ENCODE measurements at regions of chr18 and their contacts with region 1.

Region 1: DNA sequence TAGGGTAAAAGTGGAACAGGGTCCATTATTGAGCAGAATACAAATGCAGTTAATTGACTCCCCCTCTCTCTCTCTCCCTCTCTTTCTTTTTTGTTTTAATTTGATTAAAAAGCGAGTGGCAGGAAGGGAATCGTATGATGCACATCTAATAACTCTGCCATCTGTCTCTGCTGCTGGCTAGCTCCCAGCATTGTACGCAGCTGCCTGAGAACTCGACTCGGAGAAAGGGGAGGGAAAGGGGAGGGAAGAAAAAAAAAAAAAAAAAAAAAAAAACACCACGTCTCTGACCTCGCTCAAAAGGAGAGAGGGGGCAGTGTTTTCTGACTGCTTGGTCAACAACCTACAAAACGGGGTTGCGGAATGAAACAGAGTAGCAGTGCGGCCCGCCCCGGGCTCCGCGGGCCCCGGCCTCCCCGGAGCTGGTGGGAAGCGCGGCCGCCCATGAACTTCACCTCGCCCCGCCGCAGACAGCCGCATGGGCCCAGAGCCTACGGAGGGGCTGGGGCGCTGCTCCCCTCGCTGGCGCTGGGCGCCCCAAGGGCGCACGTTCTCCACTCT is 265.7 kb downstream of the TCF4 start:
- DNase-seq: peak; percentile 60
- ATAC-seq: peak; percentile 62
- H3K4me3 Mint-ChIP-seq: peak overlapping the region; percentile 90
- H3K27ac Mint-ChIP-seq: peak overlapping the region; percentile 92
- H3K4me1 Mint-ChIP-seq: peaks cover 63% of the 10 kb centered on the region
- H3K27me3 Mint-ChIP-seq: no peaks in the 10 kb centered on the region
- CTCF ChIP-seq: no peak

Region 2: DNA sequence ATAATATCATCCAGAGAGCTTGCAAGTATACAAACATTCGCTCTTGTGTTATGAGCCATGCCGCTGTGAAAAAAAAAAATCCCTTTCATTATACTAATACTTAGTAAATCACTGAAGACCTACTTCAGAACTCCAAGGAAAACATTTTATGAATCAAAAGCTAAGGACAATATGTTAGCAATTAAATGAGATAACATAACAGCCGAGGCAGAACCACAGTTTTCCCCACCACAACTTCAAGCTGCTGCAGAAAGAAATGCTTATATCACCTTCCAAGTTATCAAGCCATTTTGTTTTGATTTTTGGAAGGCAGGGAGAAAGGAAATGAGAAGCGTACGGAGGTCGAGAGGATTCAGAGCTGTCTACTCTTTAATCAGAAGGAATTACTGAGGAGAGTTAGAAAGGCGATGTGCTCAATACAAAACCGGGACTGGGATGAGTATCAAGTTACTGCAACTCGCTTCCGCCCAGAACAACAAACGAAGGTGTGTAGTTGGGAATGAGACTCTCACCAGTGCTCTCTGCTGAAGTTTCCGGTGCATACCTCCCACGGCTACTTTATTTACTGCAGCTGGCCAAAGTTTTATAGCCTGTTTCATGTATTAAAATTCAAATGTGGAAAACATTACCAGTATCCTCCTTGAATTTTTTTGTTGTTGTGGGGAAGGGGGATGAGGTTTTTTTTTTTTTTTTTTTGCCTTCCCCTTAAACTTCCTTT is 70.8 kb before region 1 on chr18:
- CTCF ChIA-PET with region 1: no interaction called
- POLR2A ChIA-PET with region 1: interaction called, 6 read pairs
- intact Hi-C with region 1: loop called (anchors 2 kb)
- DNase-seq: no peak
- ATAC-seq: no peak
- H3K4me3 Mint-ChIP-seq: peak overlapping the region; percentile 2
- H3K27ac Mint-ChIP-seq: peak overlapping the region; percentile 74
- H3K4me1 Mint-ChIP-seq: peaks cover 69% of the 10 kb centered on the region
- H3K27me3 Mint-ChIP-seq: no peaks in the 10 kb centered on the region
- CTCF ChIP-seq: no peak

Region 3: GRCh38 chr18:55307505-55307904 is 14.8 kb before region 1 on chr18:
- CTCF ChIA-PET with region 1: interaction called, 5 read pairs
- POLR2A ChIA-PET with region 1: interaction called, 13 read pairs
- intact Hi-C with region 1: loop called (anchors 1 kb)
- DNase-seq: no peak
- ATAC-seq: peak; percentile 42
- H3K4me3 Mint-ChIP-seq: peak overlapping the region; percentile 56
- H3K27ac Mint-ChIP-seq: peak overlapping the region; percentile 21
- H3K4me1 Mint-ChIP-seq: peaks cover 95% of the 10 kb centered on the region
- H3K27me3 Mint-ChIP-seq: no peaks in the 10 kb centered on the region
- CTCF ChIP-seq: no peak

Region 4: DNA sequence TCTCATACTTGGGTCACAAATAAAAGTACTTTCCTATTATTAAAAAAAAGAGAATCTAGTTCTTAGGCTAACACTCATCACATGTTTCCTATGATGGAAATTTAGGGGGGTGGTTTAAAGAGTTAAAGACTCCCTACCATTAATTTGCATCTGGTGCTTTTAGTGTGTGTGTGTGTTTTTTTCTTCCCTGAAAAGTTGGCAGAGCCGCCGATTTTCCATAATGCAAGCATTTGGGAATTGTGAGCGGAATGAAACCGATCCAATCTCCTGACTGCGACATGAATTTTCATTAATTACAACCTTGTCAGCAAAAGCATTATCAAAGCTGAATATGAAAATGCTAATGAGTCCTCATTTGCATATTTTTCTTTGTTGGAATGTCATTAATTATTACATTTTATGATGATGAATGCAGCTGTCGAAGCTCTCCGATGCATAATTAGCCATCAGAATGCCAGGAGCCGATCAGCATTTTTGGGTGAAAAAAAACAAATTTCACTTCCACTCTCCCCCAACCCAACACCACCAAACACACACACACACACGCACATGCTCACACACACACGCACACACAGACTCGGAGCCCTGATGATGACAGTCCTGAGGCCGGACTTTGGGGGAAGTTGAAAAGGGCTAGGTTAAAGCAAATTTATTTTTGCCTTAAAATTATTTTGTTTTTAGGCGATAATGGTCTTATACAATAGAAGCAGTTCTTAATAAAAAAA is 100.4 kb after region 1 on chr18:
- CTCF ChIA-PET with region 1: no interaction called
- POLR2A ChIA-PET with region 1: interaction called, 14 read pairs
- intact Hi-C with region 1: loop called (anchors 2 kb)
- DNase-seq: no peak
- ATAC-seq: no peak
- H3K4me3 Mint-ChIP-seq: peak overlapping the region; percentile 84
- H3K27ac Mint-ChIP-seq: peak overlapping the region; percentile 75
- H3K4me1 Mint-ChIP-seq: peaks cover 64% of the 10 kb centered on the region
- H3K27me3 Mint-ChIP-seq: peaks cover 2% of the 10 kb centered on the region
- CTCF ChIP-seq: no peak

Region 5: GRCh38 chr18:56112013-56112749 is 789.9 kb after region 1 on chr18:
- CTCF ChIA-PET with region 1: no interaction called
- POLR2A ChIA-PET with region 1: no interaction called
- intact Hi-C with region 1: loop called (anchors 5 kb)
- DNase-seq: no peak
- ATAC-seq: peak; percentile 92
- H3K4me3 Mint-ChIP-seq: peak overlapping the region; percentile 64
- H3K27ac Mint-ChIP-seq: peak overlapping the region; percentile 72
- H3K4me1 Mint-ChIP-seq: peaks cover 50% of the 10 kb centered on the region
- H3K27me3 Mint-ChIP-seq: no peaks in the 10 kb centered on the region
- CTCF ChIP-seq: no peak

Measured in activated B cell treated with CpG ODN at 0.5 μM for 24 hours (primary cell).